ENCODE measurements at regions of chr7 and their contacts with region 1.

Region 1: GRCh38 chr7:75642810-75643486 is 95.8 kb downstream of the HIP1 start:
- DNase-seq: peak; percentile 39
- ATAC-seq: peak; percentile 94
- H3K4me3 ChIP-seq: no peak overlapping the region
- H3K27ac ChIP-seq: no peak overlapping the region
- H3K4me1 ChIP-seq: peaks cover 4% of the 10 kb centered on the region
- H3K27me3 ChIP-seq: peaks cover 0 to 1% of the 10 kb centered on the region in 2 experiments; a peak in 1 of 4 replicates
- CTCF ChIP-seq: peak; percentile 82 to 96 (median 86)
- EP300 ChIP-seq: no peak
- POLR2A ChIP-seq: no peak
- RAD21 ChIP-seq: peak; percentile 93

Region 2: GRCh38 chr7:75066521-75066920 is 576.4 kb before region 1 on chr7:
- CTCF ChIA-PET with region 1: interaction called, 3 read pairs
- POLR2A ChIA-PET with region 1: no interaction called
- RAD21 ChIA-PET with region 1: no interaction called
- SMC1A ChIA-PET with region 1: no interaction called
- in situ Hi-C with region 1: loop called (anchors 10 kb)
- intact Hi-C with region 1: no loop called
- DNase-seq: no peak
- ATAC-seq: no peak
- H3K4me3 ChIP-seq: no peak overlapping the region
- H3K27ac ChIP-seq: no peak overlapping the region
- H3K4me1 ChIP-seq: no peaks in the 10 kb centered on the region
- H3K27me3 ChIP-seq: no peaks in the 10 kb centered on the region
- CTCF ChIP-seq: no peak
- EP300 ChIP-seq: no peak
- POLR2A ChIP-seq: no peak
- RAD21 ChIP-seq: no peak

Region 3: GRCh38 chr7:75534727-75535307 is 108.1 kb before region 1 on chr7:
- CTCF ChIA-PET with region 1: no interaction called
- POLR2A ChIA-PET with region 1: no interaction called
- RAD21 ChIA-PET with region 1: interaction called, 3 read pairs
- SMC1A ChIA-PET with region 1: no interaction called
- in situ Hi-C with region 1: no loop called
- intact Hi-C with region 1: loop called (anchors 10 kb)
- DNase-seq: peak; percentile 35
- ATAC-seq: peak; percentile 98
- H3K4me3 ChIP-seq: no peak overlapping the region
- H3K27ac ChIP-seq: peak overlapping the region; percentile 51
- H3K4me1 ChIP-seq: peaks cover 11% of the 10 kb centered on the region
- H3K27me3 ChIP-seq: no peaks in the 10 kb centered on the region
- CTCF ChIP-seq: no peak
- EP300 ChIP-seq: peak; percentile 20 to 62; a peak in 1 of 4 replicates
- POLR2A ChIP-seq: no peak
- RAD21 ChIP-seq: no peak

Region 4: GRCh38 chr7:75624134-75624832 is 18.7 kb before region 1 on chr7:
- CTCF ChIA-PET with region 1: no interaction called
- POLR2A ChIA-PET with region 1: no interaction called
- RAD21 ChIA-PET with region 1: no interaction called
- SMC1A ChIA-PET with region 1: no interaction called
- in situ Hi-C with region 1: no loop called
- intact Hi-C with region 1: no loop called
- DNase-seq: no peak
- ATAC-seq: no peak
- H3K4me3 ChIP-seq: no peak overlapping the region
- H3K27ac ChIP-seq: no peak overlapping the region
- H3K4me1 ChIP-seq: peaks cover 8% of the 10 kb centered on the region
- H3K27me3 ChIP-seq: no peaks in the 10 kb centered on the region
- CTCF ChIP-seq: no peak
- EP300 ChIP-seq: no peak
- POLR2A ChIP-seq: no peak
- RAD21 ChIP-seq: no peak

Region 5: GRCh38 chr7:75688200-75689136 is 45.5 kb after region 1 on chr7:
- CTCF ChIA-PET with region 1: no interaction called
- POLR2A ChIA-PET with region 1: no interaction called
- RAD21 ChIA-PET with region 1: no interaction called
- SMC1A ChIA-PET with region 1: no interaction called
- in situ Hi-C with region 1: no loop called
- intact Hi-C with region 1: no loop called
- DNase-seq: no peak
- ATAC-seq: peak; percentile 37; the same call in 2 of the 3 replicates
- H3K4me3 ChIP-seq: no peak overlapping the region
- H3K27ac ChIP-seq: no peak overlapping the region
- H3K4me1 ChIP-seq: peaks cover 14% of the 10 kb centered on the region
- H3K27me3 ChIP-seq: no peaks in the 10 kb centered on the region
- CTCF ChIP-seq: no peak
- EP300 ChIP-seq: no peak
- POLR2A ChIP-seq: no peak
- RAD21 ChIP-seq: no peak

Measured in GM12878 (cell line).